ENCODE measurements at regions of chr1 and their contacts with region 1.

Region 1: GRCh38 chr1:113072757-113073478 is at the start of gene LRIG2:
- DNase-seq: peak; percentile 100
- ATAC-seq: peak; percentile 96
- H3K4me3 Mint-ChIP-seq: peak within 1 kb of the TSS; percentile 98
- H3K27ac Mint-ChIP-seq: peak within 1 kb of the TSS; percentile 97
- H3K4me1 Mint-ChIP-seq: peaks cover 31% of the 10 kb centered on the region
- H3K27me3 Mint-ChIP-seq: no peaks in the 10 kb centered on the region
- CTCF ChIP-seq: peak; percentile 75
- total RNA-seq, gene LRIG2: 22.5 to 23.5 TPM (median 22.9 TPM) in 3 replicates

Region 2: GRCh38 chr1:112809253-112809684 is 263.6 kb before region 1 on chr1:
- CTCF ChIA-PET with region 1: interaction called, 44 read pairs
- POLR2A ChIA-PET with region 1: interaction called, 3 read pairs
- DNase-seq: peak; percentile 91
- ATAC-seq: peak; percentile 84
- H3K4me3 Mint-ChIP-seq: peak overlapping the region; percentile 48
- H3K27ac Mint-ChIP-seq: peak overlapping the region; percentile 45
- H3K4me1 Mint-ChIP-seq: peaks cover 89% of the 10 kb centered on the region
- H3K27me3 Mint-ChIP-seq: no peaks in the 10 kb centered on the region
- CTCF ChIP-seq: peak; percentile 66

Region 3: DNA sequence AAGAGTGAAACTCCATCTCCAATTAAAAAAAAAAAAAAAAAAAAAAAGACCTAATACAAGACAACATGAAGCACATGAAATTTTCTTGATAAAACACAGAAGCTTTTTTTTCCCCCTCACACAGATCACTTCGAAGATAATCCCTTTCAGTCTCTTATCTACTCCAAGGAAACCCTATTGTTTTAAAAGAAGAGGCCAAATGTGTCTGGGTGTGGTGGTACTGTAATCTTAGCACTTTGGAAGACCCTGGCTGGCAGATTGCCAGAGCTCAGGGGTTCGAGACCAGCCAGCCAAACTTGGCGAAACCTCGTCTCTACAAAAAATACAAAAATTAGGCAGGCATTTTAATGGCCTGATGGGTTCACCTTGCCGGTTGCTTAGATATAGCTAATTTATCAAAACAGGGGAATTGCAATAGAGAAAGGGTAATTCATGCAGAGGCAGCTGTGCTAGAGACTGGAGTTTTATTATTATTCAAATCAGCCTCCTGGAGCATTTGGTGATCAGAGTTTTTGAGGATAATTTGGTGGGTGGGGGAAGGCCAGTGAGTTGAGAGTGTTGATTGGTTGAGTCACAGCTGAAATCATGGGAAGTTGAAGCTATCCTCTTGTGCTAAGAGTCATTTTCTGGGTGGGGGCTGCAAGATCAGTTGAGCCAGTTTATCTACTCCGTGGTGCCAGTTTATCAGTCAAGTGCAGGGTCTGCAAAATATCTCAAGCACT is 179.5 kb before region 1 on chr1:
- CTCF ChIA-PET with region 1: interaction called, 10 read pairs
- POLR2A ChIA-PET with region 1: no interaction called
- DNase-seq: no peak
- ATAC-seq: no peak
- H3K4me3 Mint-ChIP-seq: no peak overlapping the region
- H3K27ac Mint-ChIP-seq: no peak overlapping the region
- H3K4me1 Mint-ChIP-seq: no peaks in the 10 kb centered on the region
- H3K27me3 Mint-ChIP-seq: peaks cover 8% of the 10 kb centered on the region
- CTCF ChIP-seq: no peak

Region 4: DNA sequence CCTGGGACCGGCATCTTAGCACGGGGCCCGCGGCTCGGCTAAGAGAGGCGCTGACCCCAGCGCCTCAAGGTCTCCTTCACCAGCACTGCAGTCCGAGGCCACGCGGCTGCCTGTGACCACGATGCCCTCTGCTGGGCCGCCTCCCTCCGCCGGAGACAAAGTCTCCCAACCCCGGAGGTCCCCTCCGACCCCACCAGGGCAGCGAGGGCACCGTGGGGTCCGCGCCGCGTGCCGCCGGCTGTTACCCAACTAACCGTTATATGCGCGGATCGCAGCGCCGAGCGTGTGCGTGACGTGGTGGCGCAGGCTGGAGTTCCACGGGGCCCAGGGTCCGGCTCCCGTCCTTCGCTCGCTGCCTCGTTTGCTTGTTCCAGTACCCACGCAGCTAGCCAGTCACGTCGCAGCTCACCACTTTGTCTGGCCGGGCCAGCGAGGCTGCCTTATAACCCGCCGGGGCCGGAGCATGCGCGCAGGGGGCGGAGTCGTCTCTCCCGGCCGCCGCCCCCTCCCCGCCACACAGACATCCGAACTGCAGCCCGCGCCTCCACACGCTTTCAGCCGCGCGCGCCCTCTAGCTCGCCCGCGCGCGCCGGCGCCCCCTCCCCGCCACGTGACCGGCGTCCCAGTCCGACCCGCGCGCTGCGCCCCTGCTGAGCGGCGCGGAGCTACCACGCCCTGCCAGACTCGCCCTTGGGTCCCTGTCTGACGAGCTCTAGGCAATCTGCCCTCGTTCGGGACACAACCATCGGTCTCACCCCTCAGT is 117.0 kb before region 1 on chr1 and contains the start of gene SLC16A1:
- CTCF ChIA-PET with region 1: interaction called, 19 read pairs
- POLR2A ChIA-PET with region 1: interaction called, 5 read pairs
- DNase-seq: peak; percentile 82
- ATAC-seq: peak; percentile 77
- H3K4me3 Mint-ChIP-seq: peak within 1 kb of the TSS; percentile 96
- H3K27ac Mint-ChIP-seq: peak within 1 kb of the TSS; percentile 96
- H3K4me1 Mint-ChIP-seq: peaks cover 55% of the 10 kb centered on the region
- H3K27me3 Mint-ChIP-seq: no peaks in the 10 kb centered on the region
- CTCF ChIP-seq: no peak
- total RNA-seq, gene SLC16A1: 328 to 381 TPM (median 374 TPM) in 3 replicates

Region 5: DNA sequence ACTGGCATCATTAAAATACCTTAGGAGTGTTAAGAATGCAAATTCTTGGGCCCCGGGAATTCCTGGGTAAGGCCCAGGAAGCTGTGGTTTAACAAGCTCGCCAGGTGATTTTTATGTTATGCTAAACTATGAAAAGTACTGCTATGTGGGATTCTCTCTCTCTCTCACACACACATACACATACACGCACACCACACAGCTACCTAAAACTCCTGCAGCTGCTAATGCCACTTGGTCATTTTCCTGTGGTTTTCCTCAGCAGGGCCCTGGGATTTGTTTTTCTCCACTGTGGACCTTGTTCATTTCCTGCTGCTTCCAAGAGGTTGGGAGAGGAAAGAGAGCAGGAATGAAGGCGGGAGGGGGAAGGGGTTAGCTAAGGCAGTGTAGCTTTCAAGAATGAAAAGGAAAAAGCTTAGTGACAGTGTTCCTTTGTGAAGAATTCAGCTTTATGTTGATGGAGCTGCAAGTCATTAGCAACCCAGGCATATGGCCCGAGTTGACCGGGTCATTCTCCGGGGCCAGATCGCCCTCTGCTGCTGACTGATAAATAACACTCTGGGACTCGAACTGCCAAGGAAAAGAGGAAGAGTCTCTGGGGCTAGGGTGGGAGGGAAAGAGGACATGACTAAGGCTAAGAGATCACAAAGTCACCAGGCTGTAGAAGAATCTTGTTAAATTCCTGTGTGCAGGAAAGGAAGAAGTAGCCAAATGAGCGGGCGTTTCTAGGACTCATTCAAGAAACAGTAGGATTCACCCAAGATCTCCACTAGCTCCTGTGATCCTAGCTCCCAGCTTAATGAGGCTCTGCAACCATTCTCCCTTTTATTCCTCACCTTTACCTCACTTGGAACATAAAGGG is 30.4 kb before region 1 on chr1:
- CTCF ChIA-PET with region 1: interaction called, 149 read pairs
- POLR2A ChIA-PET with region 1: interaction called, 36 read pairs
- DNase-seq: peak; percentile 87
- ATAC-seq: peak; percentile 82
- H3K4me3 Mint-ChIP-seq: peak overlapping the region; percentile 45
- H3K27ac Mint-ChIP-seq: peak overlapping the region; percentile 100
- H3K4me1 Mint-ChIP-seq: peaks cover 62% of the 10 kb centered on the region
- H3K27me3 Mint-ChIP-seq: no peaks in the 10 kb centered on the region; the same call in 1 of the 2 replicates
- CTCF ChIP-seq: 0 out of 2 replicates have a peak, but pooled peaks have one; percentile 22

Region 6: DNA sequence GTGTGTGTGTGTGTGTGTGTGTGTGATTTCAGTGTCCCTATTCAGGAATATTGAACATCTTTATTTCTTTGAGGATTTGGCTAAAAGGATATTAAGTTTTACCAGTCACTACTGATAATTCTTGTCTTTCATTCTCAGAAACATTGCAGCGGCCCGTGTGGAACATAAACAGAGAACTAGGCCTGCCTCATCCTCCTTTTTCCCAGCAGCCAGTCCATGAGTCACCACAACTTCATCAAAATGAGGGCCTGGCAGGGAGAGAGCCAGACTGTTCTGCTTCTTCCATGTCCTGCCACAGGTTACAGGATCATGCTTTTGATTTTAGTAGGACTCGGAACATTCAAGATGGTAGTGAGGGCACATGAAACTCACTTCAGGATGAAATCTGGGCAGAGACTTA is 50.8 kb after region 1 on chr1:
- CTCF ChIA-PET with region 1: no interaction called
- POLR2A ChIA-PET with region 1: no interaction called
- DNase-seq: no peak
- ATAC-seq: no peak
- H3K4me3 Mint-ChIP-seq: no peak overlapping the region
- H3K27ac Mint-ChIP-seq: no peak overlapping the region
- H3K4me1 Mint-ChIP-seq: no peaks in the 10 kb centered on the region
- H3K27me3 Mint-ChIP-seq: no peaks in the 10 kb centered on the region
- CTCF ChIP-seq: no peak

Region 7: DNA sequence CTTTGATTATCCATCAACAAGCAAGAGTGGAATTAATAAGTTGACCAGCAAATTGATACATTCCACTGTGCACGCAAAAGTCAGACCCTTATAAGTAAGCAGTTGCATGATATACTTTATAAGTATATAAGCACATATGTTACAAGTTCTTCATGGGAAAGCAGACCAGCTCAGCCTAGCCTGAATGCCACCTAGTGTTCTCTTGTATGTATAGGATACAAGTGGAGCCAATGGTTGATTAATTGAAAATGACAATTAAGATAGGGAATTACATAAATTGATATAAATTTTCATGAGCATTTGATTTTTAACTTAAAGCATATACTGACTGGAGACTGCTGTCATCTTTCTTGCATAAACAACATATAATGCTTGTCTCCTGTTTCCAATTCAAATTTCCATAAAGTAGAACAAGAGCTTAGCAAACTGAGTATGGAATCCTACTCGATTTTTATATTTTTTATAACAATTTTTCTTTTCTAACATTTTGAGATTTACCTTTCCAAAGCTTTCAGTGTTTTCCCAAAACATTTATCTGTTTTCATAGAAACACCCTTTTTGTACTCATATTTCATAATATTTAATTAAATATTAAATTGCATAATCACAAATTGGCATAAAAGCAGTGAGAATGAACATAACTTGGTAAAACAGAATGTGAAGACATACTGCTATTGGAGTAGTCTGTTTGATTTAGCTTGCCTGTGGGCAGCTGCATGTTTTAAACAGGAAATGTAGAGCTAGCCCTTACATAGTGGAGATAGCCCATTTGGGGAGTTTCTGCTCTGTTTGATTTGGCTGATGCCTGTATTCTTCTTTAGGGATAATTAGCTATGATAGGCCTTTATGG is 380.2 kb after region 1 on chr1:
- CTCF ChIA-PET with region 1: no interaction called
- POLR2A ChIA-PET with region 1: no interaction called
- DNase-seq: peak; percentile 12
- ATAC-seq: peak; percentile 65
- H3K4me3 Mint-ChIP-seq: no peak overlapping the region
- H3K27ac Mint-ChIP-seq: no peak overlapping the region
- H3K4me1 Mint-ChIP-seq: peaks cover 4% of the 10 kb centered on the region
- H3K27me3 Mint-ChIP-seq: no peaks in the 10 kb centered on the region
- CTCF ChIP-seq: no peak